SK-N-SH (cell line): ENCODE measurements at regions of chr15 and their contacts with region 1.

Region 1: DNA sequence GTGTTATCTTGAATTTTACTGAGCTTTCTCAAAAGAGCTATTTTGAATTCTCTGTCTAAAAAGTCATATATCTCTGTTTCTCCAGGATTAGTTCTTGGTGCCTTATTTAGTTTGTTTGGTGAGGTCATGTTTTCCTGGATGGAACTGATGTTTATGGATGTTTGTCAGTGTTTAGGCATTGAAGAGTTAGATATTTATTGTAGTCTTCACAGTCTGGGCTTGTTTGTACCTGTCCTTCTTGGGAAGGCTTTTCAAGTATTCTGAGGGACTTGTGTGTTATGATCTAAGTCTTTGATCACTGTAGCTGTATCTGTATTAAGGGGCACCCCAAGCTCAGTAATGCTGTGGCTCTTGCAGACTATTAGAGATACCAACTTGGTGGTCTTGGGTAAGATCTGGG is 10.6 kb upstream of the RAD51 start:
- DNase-seq: no peak
- H3K4me3 ChIP-seq: no peak overlapping the region
- H3K27ac ChIP-seq: no peak overlapping the region
- H3K4me1 ChIP-seq: no peaks in the 10 kb centered on the region
- H3K27me3 ChIP-seq: no peaks in the 10 kb centered on the region
- CTCF ChIP-seq: no peak
- EP300 ChIP-seq: no peak
- RAD21 ChIP-seq: no peak

Region 2: GRCh38 chr15:40598126-40598525 is 86.3 kb before region 1 on chr15:
- CTCF ChIA-PET with region 1: no interaction called
- POLR2A ChIA-PET with region 1: no interaction called
- DNase-seq: no peak
- H3K4me3 ChIP-seq: no peak overlapping the region
- H3K27ac ChIP-seq: no peak overlapping the region
- H3K4me1 ChIP-seq: no peaks in the 10 kb centered on the region
- H3K27me3 ChIP-seq: no peaks in the 10 kb centered on the region
- CTCF ChIP-seq: no peak
- EP300 ChIP-seq: no peak
- RAD21 ChIP-seq: no peak

Region 3: DNA sequence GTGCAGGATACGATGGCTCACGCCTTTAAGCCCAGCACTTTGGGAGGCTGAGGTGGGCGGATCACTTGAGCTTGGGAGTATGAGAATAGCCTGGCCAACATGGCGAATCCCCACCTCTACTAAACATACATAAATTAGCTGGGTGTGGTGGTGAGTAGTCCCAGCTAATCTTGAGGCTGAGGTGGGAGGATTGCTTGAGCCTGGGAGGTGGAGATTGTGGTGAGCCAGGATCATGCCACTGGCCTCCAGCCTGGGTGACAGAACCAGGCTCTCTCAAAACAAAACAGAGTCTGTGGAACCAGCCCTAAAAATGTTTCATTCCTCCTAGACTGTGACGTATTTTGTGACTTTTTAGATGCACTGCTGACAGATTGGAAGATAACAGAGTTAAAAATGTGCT is 23.7 kb before region 1 on chr15:
- CTCF ChIA-PET with region 1: interaction called, 15 read pairs
- POLR2A ChIA-PET with region 1: no interaction called
- DNase-seq: no peak
- H3K4me3 ChIP-seq: no peak overlapping the region
- H3K27ac ChIP-seq: no peak overlapping the region
- H3K4me1 ChIP-seq: no peaks in the 10 kb centered on the region
- H3K27me3 ChIP-seq: no peaks in the 10 kb centered on the region
- CTCF ChIP-seq: no peak
- EP300 ChIP-seq: no peak
- RAD21 ChIP-seq: no peak

Region 4: GRCh38 chr15:40694688-40695468 is 10.5 kb after region 1 on chr15 and contains the start of gene RAD51:
- CTCF ChIA-PET with region 1: interaction called, 16 read pairs
- POLR2A ChIA-PET with region 1: no interaction called
- DNase-seq: peak; percentile 95
- H3K4me3 ChIP-seq: peak within 1 kb of the TSS; percentile 72 to 90
- H3K27ac ChIP-seq: peak within 1 kb of the TSS; percentile 96 to 97
- H3K4me1 ChIP-seq: peaks cover 0 to 4% of the 10 kb centered on the region in 2 experiments; a peak in 1 of 4 replicates
- H3K27me3 ChIP-seq: no peaks in the 10 kb centered on the region
- CTCF ChIP-seq: no peak
- EP300 ChIP-seq: no peak
- RAD21 ChIP-seq: no peak
- polyA plus RNA-seq, gene RAD51: 6.6 and 7.6 TPM in 2 replicates